ENCODE measurements at regions of chr14 and their contacts with region 1.

Region 1: GRCh38 chr14:22986508-22987054 is 4.2 kb upstream of the AJUBA start:
- DNase-seq: no peak
- ATAC-seq: peak; percentile 90
- H3K4me3 ChIP-seq: no peak overlapping the region
- H3K27ac ChIP-seq: no peak overlapping the region
- H3K4me1 ChIP-seq: no peaks in the 10 kb centered on the region; the same call in 1 of the 2 replicates
- H3K27me3 ChIP-seq: peaks cover 3% of the 10 kb centered on the region in 2 experiments
- CTCF ChIP-seq: peak; percentile 85 to 94 (median 93)
- EP300 ChIP-seq: no peak
- POLR2A ChIP-seq: no peak
- RAD21 ChIP-seq: peak; percentile 95

Region 2: GRCh38 chr14:22955702-22956569 is 30.6 kb before region 1 on chr14:
- CTCF ChIA-PET with region 1: interaction called, 91 read pairs
- POLR2A ChIA-PET with region 1: interaction called, 3 read pairs
- RAD21 ChIA-PET with region 1: interaction called, 6 read pairs
- SMC1A ChIA-PET with region 1: interaction called, 10 read pairs
- in situ Hi-C with region 1: no loop called
- intact Hi-C with region 1: no loop called
- DNase-seq: no peak
- ATAC-seq: no peak
- H3K4me3 ChIP-seq: peak overlapping the region; percentile 85
- H3K27ac ChIP-seq: peak overlapping the region; percentile 90
- H3K4me1 ChIP-seq: no peaks in the 10 kb centered on the region
- H3K27me3 ChIP-seq: no peaks in the 10 kb centered on the region
- CTCF ChIP-seq: no peak
- EP300 ChIP-seq: no peak
- POLR2A ChIP-seq: no peak
- RAD21 ChIP-seq: no peak

Region 3: DNA sequence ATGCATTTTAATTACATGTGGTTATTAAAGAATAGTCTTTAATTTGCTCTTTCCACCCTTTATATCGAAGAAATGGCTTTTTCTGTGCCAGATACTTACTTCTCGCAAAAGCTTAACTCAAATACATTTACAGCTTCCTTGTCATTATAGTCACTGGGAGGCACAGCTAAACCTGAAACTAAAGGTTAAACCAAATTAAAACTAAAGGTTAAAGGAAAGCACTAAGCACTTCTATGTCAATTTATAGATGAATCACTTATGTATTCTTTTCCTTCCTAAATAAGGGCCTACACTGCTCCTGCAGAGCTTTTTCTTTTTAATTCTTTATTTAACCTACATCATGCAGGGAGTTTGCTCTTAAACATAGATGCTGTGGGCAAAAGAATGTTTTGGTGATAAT is 14.3 kb after region 1 on chr14:
- CTCF ChIA-PET with region 1: interaction called, 128 read pairs
- POLR2A ChIA-PET with region 1: interaction called, 11 read pairs
- RAD21 ChIA-PET with region 1: interaction called, 34 read pairs
- SMC1A ChIA-PET with region 1: interaction called, 39 read pairs
- in situ Hi-C with region 1: no loop called
- intact Hi-C with region 1: no loop called
- DNase-seq: no peak
- ATAC-seq: no peak
- H3K4me3 ChIP-seq: no peak overlapping the region
- H3K27ac ChIP-seq: no peak overlapping the region
- H3K4me1 ChIP-seq: peaks cover 4% of the 10 kb centered on the region; the same call in 1 of the 2 replicates
- H3K27me3 ChIP-seq: no peaks in the 10 kb centered on the region
- CTCF ChIP-seq: no peak
- EP300 ChIP-seq: no peak
- POLR2A ChIP-seq: no peak
- RAD21 ChIP-seq: no peak

Region 4: DNA sequence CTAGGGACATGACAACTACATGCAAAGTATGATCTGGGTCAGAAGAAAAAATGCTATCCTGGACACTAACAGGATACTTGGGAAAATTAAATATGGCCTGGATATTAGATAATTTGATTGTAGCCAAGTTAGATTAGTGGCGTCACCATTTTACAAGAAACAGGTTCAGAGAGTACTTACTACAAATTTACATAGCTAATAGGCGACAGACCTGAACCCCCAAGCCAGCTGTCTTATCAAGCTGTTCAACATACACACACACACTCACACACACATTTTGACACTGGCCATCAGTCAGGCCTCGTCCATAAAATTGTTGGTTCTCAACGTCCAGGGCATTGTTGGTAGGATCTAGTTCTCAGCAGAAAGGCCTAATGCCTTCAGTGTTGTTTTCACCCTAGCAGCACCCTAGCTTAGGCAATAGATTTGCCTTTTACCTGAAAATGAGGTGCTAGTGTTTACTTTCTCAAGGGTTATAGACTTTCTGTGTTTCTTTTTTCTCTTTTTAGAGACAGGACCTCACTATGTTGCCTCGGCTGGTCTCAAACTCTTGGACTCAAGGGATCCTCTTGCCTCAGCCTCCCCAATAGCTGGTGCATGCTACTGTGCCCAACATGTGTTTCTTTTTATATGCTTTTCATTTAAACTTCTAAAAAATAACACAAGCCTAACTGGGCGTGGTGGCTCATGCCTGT is 26.6 kb after region 1 on chr14:
- CTCF ChIA-PET with region 1: interaction called, 108 read pairs
- POLR2A ChIA-PET with region 1: no interaction called
- RAD21 ChIA-PET with region 1: interaction called, 4 read pairs
- SMC1A ChIA-PET with region 1: interaction called, 22 read pairs
- in situ Hi-C with region 1: no loop called
- intact Hi-C with region 1: no loop called
- DNase-seq: no peak
- ATAC-seq: no peak
- H3K4me3 ChIP-seq: no peak overlapping the region
- H3K27ac ChIP-seq: no peak overlapping the region
- H3K4me1 ChIP-seq: peaks cover 9% of the 10 kb centered on the region; the same call in 1 of the 2 replicates
- H3K27me3 ChIP-seq: no peaks in the 10 kb centered on the region
- CTCF ChIP-seq: no peak
- EP300 ChIP-seq: no peak
- POLR2A ChIP-seq: no peak
- RAD21 ChIP-seq: no peak

Region 5: GRCh38 chr14:23034483-23035302 is 48.1 kb after region 1 on chr14 and contains the start of gene PSMB5:
- CTCF ChIA-PET with region 1: interaction called, 16 read pairs
- POLR2A ChIA-PET with region 1: no interaction called
- RAD21 ChIA-PET with region 1: interaction called, 3 read pairs
- SMC1A ChIA-PET with region 1: interaction called, 15 read pairs
- in situ Hi-C with region 1: no loop called
- intact Hi-C with region 1: no loop called
- DNase-seq: peak; percentile 98
- ATAC-seq: peak; percentile 98
- H3K4me3 ChIP-seq: peak within 1 kb of the TSS; percentile 83
- H3K27ac ChIP-seq: peak within 1 kb of the TSS; percentile 92
- H3K4me1 ChIP-seq: peaks cover 6% of the 10 kb centered on the region
- H3K27me3 ChIP-seq: no peaks in the 10 kb centered on the region
- CTCF ChIP-seq: no peak
- EP300 ChIP-seq: no peak
- POLR2A ChIP-seq: peak; percentile 91
- RAD21 ChIP-seq: no peak
- polyA plus RNA-seq, gene PSMB5: 686 to 802 TPM

Region 6: DNA sequence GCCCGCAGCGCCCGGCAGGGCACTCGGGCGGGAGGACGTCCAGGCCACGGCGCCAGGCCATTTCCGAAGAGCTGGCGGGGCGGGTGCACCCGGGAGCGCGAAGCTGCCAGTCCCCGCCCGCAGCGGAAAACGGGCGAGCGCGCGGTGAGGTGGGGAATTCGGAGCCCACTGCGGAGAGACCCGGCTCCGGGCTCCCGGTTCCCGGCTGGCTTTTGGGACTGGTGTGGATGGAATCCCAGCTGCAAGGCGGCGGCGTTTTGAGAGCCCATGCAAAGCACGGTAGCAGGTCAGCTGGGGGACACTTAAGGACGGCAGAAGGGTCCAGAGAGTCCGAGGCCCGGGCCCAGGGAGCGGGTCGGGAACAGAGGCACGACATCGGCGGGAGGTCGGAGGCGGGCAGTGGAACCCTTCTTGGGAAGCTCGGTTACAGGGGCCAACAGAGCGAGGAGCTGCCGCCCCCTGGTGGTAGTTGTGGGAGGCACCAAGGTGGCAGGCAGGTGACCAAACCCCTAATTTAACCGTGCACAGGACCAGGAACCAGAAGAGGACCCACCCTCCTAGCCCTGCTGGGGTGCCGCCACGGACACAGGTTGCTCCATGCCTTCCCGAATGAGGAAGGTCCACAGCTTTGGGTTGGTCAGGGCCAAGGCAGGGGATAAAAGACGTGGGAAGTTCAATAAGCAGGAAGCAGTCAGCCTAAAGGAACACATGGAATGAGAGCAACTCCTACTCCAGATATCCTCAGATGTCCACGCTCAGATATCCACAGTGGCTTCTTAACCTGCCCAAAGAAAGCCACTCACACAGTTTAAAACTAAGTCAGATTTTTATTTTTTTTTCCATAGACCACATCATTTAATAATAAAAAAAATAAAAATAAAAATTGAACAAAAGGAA is 71.4 kb after region 1 on chr14:
- CTCF ChIA-PET with region 1: interaction called, 853 read pairs
- POLR2A ChIA-PET with region 1: interaction called, 12 read pairs
- RAD21 ChIA-PET with region 1: interaction called, 224 read pairs
- SMC1A ChIA-PET with region 1: interaction called, 156 read pairs
- in situ Hi-C with region 1: loop called (anchors 5 kb)
- intact Hi-C with region 1: loop called (anchors 1 kb)
- DNase-seq: peak; percentile 40
- ATAC-seq: peak; percentile 82
- H3K4me3 ChIP-seq: peak overlapping the region; percentile 79
- H3K27ac ChIP-seq: no peak overlapping the region
- H3K4me1 ChIP-seq: peaks cover 12% of the 10 kb centered on the region
- H3K27me3 ChIP-seq: no peaks in the 10 kb centered on the region
- CTCF ChIP-seq: peak; percentile 92 to 97 (median 96); a peak in 5 of 6 replicates
- EP300 ChIP-seq: no peak
- POLR2A ChIP-seq: peak; percentile 74
- RAD21 ChIP-seq: peak; percentile 78

Region 7: DNA sequence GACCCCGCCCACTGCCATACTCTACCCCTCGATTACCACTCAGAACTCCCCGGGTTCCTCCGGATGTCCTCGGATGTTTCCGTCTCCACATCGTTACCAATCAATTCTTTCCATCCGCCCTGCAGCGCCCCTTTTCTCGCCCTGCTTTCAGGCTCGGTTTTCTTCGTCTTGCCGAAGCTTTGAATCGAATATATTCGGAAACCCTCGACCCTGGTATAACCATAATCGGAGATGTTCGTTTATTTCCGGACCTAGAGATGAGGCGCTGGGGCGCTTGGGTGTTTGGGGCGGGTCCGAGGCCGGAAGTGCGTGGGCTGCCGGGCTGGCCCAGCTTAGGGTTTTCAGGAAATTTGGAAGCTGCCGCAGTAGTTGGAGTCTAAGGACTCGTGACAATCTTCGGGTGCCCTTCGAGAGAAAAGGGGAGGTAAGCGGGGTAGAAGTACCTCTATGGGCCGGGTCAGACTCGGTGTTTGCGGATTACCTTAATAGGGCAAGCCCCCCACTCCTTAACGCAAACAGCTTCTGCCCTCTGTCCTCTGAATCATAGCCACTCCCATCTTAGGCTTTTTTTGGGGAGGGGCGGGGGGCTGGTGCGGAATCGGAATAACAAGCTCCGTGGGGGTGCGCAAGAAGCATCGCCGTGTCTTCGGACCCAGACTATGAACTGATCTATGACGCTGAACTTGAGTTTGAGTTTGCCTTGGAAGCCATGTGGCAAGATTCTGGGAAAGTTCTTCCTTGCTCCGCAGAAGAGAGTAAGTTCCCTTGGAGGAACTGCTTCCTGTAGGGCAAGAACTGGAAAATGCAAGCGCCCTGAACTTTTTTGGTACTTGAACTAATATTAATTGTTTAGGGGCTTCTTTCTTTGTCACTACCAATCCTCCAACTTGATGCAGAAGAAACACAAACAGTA is 108.9 kb after region 1 on chr14 and contains the start of gene C14orf119:
- CTCF ChIA-PET with region 1: interaction called, 10 read pairs
- POLR2A ChIA-PET with region 1: no interaction called
- RAD21 ChIA-PET with region 1: interaction called, 9 read pairs
- SMC1A ChIA-PET with region 1: interaction called, 6 read pairs
- in situ Hi-C with region 1: no loop called
- intact Hi-C with region 1: no loop called
- DNase-seq: peak; percentile 99
- ATAC-seq: peak; percentile 93
- H3K4me3 ChIP-seq: peak within 1 kb of the TSS; percentile 92
- H3K27ac ChIP-seq: peak within 1 kb of the TSS; percentile 99
- H3K4me1 ChIP-seq: peaks cover 3% of the 10 kb centered on the region; the same call in 1 of the 2 replicates
- H3K27me3 ChIP-seq: no peaks in the 10 kb centered on the region
- CTCF ChIP-seq: no peak
- EP300 ChIP-seq: no peak
- POLR2A ChIP-seq: peak; percentile 61; the same call in 1 of the 2 replicates
- RAD21 ChIP-seq: no peak
- polyA plus RNA-seq, gene C14orf119: 166 to 228 TPM

Measured in GM12878 (cell line).